Caco-2 (cell line): ENCODE measurements at regions of chr6 and their contacts with region 1.

Region 1: DNA sequence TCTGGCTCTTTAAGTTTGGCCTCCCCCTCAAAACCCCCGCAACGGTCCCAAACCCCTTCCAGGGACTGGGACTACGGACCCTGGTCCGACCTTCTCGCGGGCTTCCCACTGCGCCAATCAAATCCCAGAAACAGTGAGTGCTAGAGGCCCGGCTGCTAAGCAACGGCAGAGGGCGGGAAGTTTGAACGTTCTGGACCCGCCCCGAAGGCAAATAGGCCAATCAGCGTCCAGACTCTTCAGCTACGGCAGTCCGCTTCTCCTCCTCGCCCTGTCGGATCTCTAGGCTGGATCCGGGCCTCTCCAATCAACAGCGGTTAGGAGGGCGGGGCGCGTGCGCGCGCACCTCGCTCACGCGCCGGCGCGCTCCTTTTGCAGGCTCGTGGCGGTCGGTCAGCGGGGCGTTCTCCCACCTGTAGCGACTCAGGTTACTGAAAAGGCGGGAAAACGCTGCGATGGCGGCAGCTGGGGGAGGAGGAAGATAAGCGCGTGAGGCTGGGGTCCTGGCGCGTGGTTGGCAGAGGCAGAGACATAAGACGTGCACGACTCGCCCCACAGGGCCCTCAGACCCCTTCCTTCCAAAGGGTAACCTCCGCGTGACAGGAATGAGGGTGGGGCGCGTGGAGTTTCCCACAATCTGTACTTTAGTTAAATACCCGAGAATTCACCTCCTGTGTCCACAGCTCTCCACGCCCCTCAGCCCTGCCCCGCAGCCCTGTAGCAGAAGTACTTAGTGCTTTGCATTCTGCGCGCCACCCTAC is at the start of gene MSH5:
- DNase-seq: peak; percentile 99
- H3K4me3 ChIP-seq: peak within 1 kb of the TSS; percentile 69
- H3K4me3 Mint-ChIP-seq: peak within 1 kb of the TSS; percentile 95
- H3K27ac Mint-ChIP-seq: peak within 1 kb of the TSS; percentile 98
- H3K4me1 ChIP-seq: peaks cover 23% of the 10 kb centered on the region
- H3K4me1 Mint-ChIP-seq: peaks cover 22% of the 10 kb centered on the region
- H3K27me3 ChIP-seq: no peaks in the 10 kb centered on the region
- H3K27me3 Mint-ChIP-seq: no peaks in the 10 kb centered on the region
- CTCF ChIP-seq: no peak
- total RNA-seq, gene MSH5: 49.6 and 51.0 TPM in 2 replicates

Region 2: DNA sequence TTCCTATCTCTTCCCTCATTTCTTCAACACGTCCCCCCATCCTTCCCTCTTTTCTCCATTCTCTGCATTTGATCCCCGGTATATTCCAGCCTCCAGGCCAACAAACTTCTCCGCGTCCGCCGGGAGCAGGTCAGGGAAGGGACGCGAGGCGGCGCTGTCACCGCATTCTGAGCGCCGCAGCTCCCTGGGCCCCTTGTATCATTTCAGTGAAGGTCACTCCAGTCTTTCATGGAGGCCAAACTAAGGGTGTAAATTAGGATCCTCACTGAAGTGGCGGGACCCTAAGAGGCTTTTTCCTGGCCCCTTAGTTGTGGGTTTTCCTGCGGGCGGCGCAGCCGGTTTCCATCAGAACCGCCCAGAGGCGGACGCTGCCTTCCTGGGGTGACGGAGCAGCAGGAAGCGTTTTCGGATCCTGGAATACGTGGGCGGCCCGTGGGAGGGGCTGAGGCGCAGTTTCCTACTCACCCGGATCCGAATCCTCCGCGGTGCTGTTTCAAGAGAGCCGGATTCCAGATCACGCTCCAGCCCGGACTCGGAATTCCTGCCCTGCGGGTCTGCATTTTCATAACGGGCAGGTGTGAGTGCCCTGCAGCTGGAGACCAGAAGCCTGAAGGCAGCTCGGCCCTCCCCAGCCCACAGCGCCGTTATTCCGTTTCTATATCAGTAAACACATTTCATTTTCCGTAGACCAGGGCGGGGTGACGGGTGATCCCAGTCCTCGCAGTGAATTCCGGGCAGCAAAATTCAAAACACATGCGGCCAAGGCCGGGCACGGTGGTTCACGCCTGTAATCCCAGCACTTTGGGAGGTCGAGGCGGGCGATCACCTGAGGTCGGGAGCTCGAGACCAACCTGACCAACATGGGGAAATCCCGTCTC is 340.0 kb before region 1 on chr6:
- CTCF ChIA-PET with region 1: no interaction called
- POLR2A ChIA-PET with region 1: no interaction called
- intact Hi-C with region 1: no loop called
- DNase-seq: peak; percentile 75 to 80
- H3K4me3 ChIP-seq: peak overlapping the region; percentile 48
- H3K4me3 Mint-ChIP-seq: peak overlapping the region; percentile 67
- H3K27ac Mint-ChIP-seq: peak overlapping the region; percentile 14
- H3K4me1 ChIP-seq: peaks cover 6% of the 10 kb centered on the region
- H3K4me1 Mint-ChIP-seq: peaks cover 28% of the 10 kb centered on the region
- H3K27me3 ChIP-seq: no peaks in the 10 kb centered on the region
- H3K27me3 Mint-ChIP-seq: no peaks in the 10 kb centered on the region
- CTCF ChIP-seq: peak; percentile 73 to 81

Region 3: GRCh38 chr6:31680840-31681671 is 58.8 kb before region 1 on chr6 and contains the start of gene LY6G5C:
- CTCF ChIA-PET with region 1: interaction called, 18 read pairs
- POLR2A ChIA-PET with region 1: interaction called, 4 read pairs
- intact Hi-C with region 1: no loop called
- DNase-seq: peak; percentile 85 to 87
- H3K4me3 ChIP-seq: peak within 1 kb of the TSS; percentile 49
- H3K4me3 Mint-ChIP-seq: peak within 1 kb of the TSS; percentile 76
- H3K27ac Mint-ChIP-seq: peak within 1 kb of the TSS; percentile 54
- H3K4me1 ChIP-seq: peaks cover 25% of the 10 kb centered on the region
- H3K4me1 Mint-ChIP-seq: peaks cover 17% of the 10 kb centered on the region
- H3K27me3 ChIP-seq: no peaks in the 10 kb centered on the region
- H3K27me3 Mint-ChIP-seq: no peaks in the 10 kb centered on the region
- CTCF ChIP-seq: peak; percentile 66 to 81
- total RNA-seq, gene LY6G5C: 2.0 and 2.9 TPM in 2 replicates

Region 4: DNA sequence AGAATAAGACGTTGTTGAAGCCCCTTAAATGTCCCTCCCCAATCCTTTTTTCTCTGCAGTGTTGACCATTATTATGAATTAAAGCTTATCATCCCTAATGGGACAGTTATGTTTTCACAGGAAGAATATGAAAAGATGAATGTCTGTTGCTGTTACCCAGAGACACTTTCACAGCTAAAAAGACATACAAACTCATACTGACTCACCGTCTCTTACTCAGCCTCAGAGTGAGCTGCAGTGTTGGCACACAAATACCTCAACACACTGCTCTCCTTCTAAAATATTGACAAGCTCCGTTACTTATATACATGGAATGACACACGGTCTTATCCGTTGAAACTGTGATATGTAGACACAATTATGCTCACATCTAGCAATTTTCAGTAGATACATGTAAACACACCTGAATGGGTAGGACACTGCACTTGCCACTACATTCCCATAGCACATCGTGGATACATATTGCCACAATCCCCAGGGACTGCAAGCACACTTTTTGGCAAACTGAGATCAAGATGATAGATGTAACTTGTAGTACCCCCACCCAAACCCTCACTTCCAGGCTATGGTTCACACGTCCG is 13.0 kb after region 1 on chr6:
- CTCF ChIA-PET with region 1: no interaction called
- POLR2A ChIA-PET with region 1: interaction called, 13 read pairs
- intact Hi-C with region 1: no loop called
- DNase-seq: no peak
- H3K4me3 ChIP-seq: no peak overlapping the region
- H3K4me3 Mint-ChIP-seq: no peak overlapping the region
- H3K27ac Mint-ChIP-seq: no peak overlapping the region
- H3K4me1 ChIP-seq: no peaks in the 10 kb centered on the region
- H3K4me1 Mint-ChIP-seq: no peaks in the 10 kb centered on the region
- H3K27me3 ChIP-seq: no peaks in the 10 kb centered on the region
- H3K27me3 Mint-ChIP-seq: no peaks in the 10 kb centered on the region
- CTCF ChIP-seq: no peak

Region 5: GRCh38 chr6:31769684-31770371 is 30.0 kb after region 1 on chr6:
- CTCF ChIA-PET with region 1: interaction called, 32 read pairs
- POLR2A ChIA-PET with region 1: interaction called, 10 read pairs
- intact Hi-C with region 1: no loop called
- DNase-seq: peak; percentile 85 to 89
- H3K4me3 ChIP-seq: no peak overlapping the region
- H3K4me3 Mint-ChIP-seq: no peak overlapping the region
- H3K27ac Mint-ChIP-seq: no peak overlapping the region
- H3K4me1 ChIP-seq: peaks cover 15% of the 10 kb centered on the region
- H3K4me1 Mint-ChIP-seq: peaks cover 8% of the 10 kb centered on the region
- H3K27me3 ChIP-seq: no peaks in the 10 kb centered on the region
- H3K27me3 Mint-ChIP-seq: no peaks in the 10 kb centered on the region
- CTCF ChIP-seq: peak; percentile 85 to 87

Region 6: DNA sequence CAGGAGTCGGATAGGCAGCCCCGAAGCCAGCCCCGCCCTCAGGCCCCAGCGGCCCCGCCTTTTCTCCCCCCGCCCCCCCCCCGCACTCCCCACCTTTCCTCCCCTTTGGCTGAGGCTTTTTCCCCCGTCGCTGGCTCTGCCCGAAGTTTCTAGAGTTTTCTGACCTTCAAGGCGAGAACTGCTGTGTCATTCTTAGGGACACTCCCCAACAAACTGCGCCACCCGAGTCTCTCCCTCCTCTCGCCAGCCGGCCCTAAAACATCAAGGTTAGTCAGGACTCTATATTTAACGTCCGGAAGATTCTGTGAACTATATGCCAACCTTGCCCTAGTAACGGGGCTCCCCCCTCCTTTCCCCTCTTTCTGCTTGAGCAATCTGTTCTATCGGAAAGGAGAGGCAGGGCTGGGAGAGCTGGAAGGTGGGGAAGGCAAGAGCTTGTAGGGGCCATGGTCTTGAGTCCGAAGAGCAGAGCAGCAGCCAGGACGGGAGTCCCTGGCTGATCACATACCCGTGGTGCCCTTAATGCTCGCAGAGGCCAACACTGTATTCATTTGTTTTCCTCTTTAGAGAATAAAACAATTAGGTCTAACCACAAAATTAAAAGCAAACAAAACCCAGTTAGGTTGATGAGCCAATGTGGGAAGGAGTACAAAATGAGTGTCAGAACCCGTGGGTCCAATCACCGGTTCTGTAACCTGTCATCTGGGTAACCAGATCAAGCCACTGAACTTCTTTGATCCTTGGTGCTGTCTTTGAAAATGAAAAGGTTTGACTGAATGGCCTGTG is 82.4 kb after region 1 on chr6:
- CTCF ChIA-PET with region 1: interaction called, 5 read pairs
- POLR2A ChIA-PET with region 1: interaction called, 32 read pairs
- intact Hi-C with region 1: loop called (anchors 2 kb)
- DNase-seq: peak; percentile 79 to 89
- H3K4me3 ChIP-seq: peak overlapping the region; percentile 45
- H3K4me3 Mint-ChIP-seq: peak overlapping the region; percentile 96
- H3K27ac Mint-ChIP-seq: peak overlapping the region; percentile 98
- H3K4me1 ChIP-seq: peaks cover 63% of the 10 kb centered on the region
- H3K4me1 Mint-ChIP-seq: peaks cover 17% of the 10 kb centered on the region
- H3K27me3 ChIP-seq: no peaks in the 10 kb centered on the region
- H3K27me3 Mint-ChIP-seq: no peaks in the 10 kb centered on the region
- CTCF ChIP-seq: no peak

Region 7: GRCh38 chr6:31933537-31933936 is 193.7 kb after region 1 on chr6:
- CTCF ChIA-PET with region 1: no interaction called
- POLR2A ChIA-PET with region 1: no interaction called
- intact Hi-C with region 1: no loop called
- DNase-seq: no peak
- H3K4me3 ChIP-seq: no peak overlapping the region
- H3K4me3 Mint-ChIP-seq: no peak overlapping the region
- H3K27ac Mint-ChIP-seq: no peak overlapping the region
- H3K4me1 ChIP-seq: no peaks in the 10 kb centered on the region
- H3K4me1 Mint-ChIP-seq: no peaks in the 10 kb centered on the region
- H3K27me3 ChIP-seq: no peaks in the 10 kb centered on the region
- H3K27me3 Mint-ChIP-seq: no peaks in the 10 kb centered on the region
- CTCF ChIP-seq: no peak

Region 8: DNA sequence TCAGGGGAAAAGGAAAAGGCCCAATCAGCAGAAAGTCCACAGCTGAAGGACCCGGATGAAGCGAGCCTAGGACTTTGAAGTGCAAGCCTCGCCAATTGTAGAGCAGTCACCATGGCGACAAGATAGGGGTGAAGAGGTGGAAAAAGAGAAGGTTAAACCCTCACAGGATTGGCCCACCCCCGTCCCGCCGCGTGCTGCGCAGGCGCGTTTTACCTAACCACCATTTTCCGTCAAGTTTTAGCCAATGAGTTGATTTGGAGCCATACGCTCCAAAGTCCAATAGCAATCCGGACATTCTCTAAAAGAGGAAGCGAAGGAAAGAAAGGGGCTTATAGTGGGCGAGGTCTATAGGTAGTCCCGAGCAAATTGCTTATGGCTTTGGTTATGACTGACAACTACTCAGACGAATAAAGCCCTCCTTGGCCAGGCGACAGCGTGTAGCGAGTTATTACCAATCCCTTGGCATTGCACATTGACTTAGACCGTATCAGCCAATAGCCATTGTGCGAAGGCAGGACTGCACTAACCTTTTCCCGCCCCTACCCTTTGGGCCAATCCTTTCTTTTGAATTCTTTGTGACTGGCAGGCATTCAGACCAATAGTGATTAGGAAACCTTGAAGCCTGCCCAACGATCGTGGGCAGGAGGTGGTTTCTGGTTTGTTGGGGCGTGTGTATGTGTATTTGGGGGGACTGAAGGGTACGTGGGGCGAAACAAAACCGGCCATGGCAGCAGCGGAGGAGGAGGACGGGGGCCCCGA is 438.1 kb after region 1 on chr6 and contains the start of gene RNF5:
- CTCF ChIA-PET with region 1: no interaction called
- POLR2A ChIA-PET with region 1: interaction called, 10 read pairs
- intact Hi-C with region 1: no loop called
- DNase-seq: peak; percentile 97 to 99
- H3K4me3 ChIP-seq: peak within 1 kb of the TSS; percentile 87
- H3K4me3 Mint-ChIP-seq: peak within 1 kb of the TSS; percentile 81
- H3K27ac Mint-ChIP-seq: peak within 1 kb of the TSS; percentile 94
- H3K4me1 ChIP-seq: peaks cover 15% of the 10 kb centered on the region
- H3K4me1 Mint-ChIP-seq: peaks cover 46% of the 10 kb centered on the region
- H3K27me3 ChIP-seq: no peaks in the 10 kb centered on the region
- H3K27me3 Mint-ChIP-seq: no peaks in the 10 kb centered on the region
- CTCF ChIP-seq: no peak
- total RNA-seq, gene RNF5: 64.7 and 70.7 TPM in 2 replicates